Cardiac septum (tissue), 1 donor: ENCODE measurements at regions of chr12 and their contacts with region 1.

Region 1: GRCh38 chr12:67394550-67394949 is 125.4 kb downstream of the CAND1 start:
- DNase-seq: peak; percentile 82

Region 2: GRCh38 chr12:67241482-67241881 is 153.1 kb before region 1 on chr12:
- intact Hi-C with region 1: no loop called
- DNase-seq: no peak

Region 3: GRCh38 chr12:67364228-67364627 is 30.3 kb before region 1 on chr12:
- intact Hi-C with region 1: loop called (anchors 5 kb)
- DNase-seq: no peak

Region 4: DNA sequence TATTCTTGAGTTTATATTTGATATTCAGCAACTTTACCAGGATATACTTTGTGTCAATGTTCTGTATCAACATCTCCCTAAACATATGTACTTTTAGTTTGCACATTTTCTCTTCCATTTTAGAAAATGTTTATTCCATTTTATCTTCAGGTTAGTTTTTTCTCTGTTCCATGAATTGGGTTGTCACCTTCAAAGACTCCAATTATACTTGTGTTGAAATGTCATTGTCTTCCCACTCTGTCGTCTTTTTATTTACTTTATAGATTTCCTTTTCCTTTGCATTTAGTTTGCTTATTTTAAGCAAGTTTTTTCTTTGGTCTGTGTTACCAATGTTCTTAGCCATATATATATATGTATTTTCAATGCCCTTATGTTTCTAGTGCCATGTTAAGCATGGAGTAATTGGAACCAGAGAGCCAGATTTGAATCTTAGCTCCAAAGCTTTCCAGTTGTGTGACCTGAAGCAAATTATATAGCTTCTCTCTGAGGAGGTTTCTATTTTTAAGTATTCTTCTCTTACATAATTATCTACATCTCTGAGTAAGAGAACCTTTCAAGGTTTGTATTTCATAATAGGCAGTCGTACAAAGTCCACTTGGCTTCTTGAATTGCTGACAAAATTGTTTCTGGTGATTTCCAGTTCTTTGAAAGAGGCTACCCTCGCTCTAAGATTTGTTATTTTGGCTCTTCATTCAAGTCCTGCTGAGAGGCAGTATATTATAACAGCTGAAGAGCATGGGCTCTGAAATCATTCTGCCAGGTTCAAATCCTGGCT is 168.2 kb after region 1 on chr12:
- intact Hi-C with region 1: no loop called
- DNase-seq: no peak

Region 5: DNA sequence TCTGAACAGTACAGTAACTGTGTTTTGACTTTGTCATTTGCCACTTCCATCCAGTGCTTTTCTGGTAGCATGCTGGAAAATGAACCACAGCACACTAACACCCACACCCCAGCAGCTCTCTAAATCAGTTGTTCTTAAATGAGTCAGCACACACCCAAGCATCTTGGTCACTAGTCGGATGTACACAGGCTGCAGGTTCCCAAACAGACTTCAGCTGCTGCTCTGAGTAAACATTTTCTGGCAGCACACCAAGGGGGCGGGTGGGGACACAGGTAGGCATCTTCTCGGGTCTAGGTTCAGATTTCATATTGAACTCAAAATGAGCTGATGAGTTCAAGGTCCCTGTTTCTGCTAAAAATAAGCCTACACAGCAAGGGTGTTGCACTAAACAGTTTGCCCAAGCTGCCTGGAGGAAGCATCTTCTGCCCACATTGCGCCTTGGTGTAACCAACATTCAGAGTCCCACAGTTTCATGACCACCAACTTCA is 725.2 kb after region 1 on chr12:
- intact Hi-C with region 1: no loop called
- DNase-seq: no peak